ENCODE measurements at regions of chr5 and their contacts with region 1.

Region 1: GRCh38 chr5:34459908-34460307 is 196.2 kb upstream of the RAI14 start:
- DNase-seq: no peak
- ATAC-seq: no peak
- H3K4me3 ChIP-seq: no peak overlapping the region
- H3K27ac ChIP-seq: no peak overlapping the region
- H3K4me1 ChIP-seq: no peaks in the 10 kb centered on the region
- H3K27me3 ChIP-seq: no peaks in the 10 kb centered on the region
- CTCF ChIP-seq: no peak
- POLR2A ChIP-seq: no peak

Region 2: DNA sequence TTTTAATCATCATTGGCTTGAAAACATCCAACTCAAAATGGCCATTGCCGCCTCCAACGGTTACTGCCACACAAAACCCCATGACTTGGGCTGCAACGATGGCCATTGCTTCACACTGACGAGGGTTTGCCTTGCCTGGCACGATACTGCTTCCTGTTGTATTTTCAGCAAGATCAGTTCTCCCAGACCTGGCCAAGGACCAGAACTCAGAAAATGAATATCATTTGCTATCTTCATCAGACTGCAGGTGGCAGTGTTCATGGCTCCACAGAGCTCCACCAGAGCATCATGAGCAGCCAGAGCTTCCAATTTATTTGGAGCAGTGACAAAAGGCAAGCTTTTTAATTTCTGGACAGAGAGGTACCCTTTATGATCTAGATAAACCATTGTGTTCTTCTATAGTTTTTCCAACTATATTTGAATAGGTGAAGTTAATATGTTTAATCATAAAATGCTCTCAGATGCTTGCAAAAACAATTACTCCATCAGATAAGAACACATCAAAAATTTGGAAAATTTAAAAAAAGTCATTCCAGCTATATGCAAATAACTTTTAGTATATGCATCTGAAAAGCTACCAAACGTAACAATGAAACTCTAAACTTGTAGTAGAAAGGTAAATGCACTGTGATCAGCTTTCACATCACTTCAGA is 462.5 kb before region 1 on chr5:
- intact Hi-C with region 1: loop called in 9 of 10 experiments (anchors 5 to 10 kb)
- DNase-seq: peak in 4 of 5 donors; percentile 26 to 59 (median 48)
- ATAC-seq: peak; percentile 47 to 82 (median 68)
- H3K4me3 ChIP-seq: no peak overlapping the region
- H3K27ac ChIP-seq: no peak overlapping the region
- H3K4me1 ChIP-seq: peaks cover 0 to 9% (median 2%) of the 10 kb centered on the region in 12 donors
- H3K27me3 ChIP-seq: no peaks in the 10 kb centered on the region
- CTCF ChIP-seq: peak; percentile 46 to 78 (median 62)
- POLR2A ChIP-seq: no peak

Region 3: DNA sequence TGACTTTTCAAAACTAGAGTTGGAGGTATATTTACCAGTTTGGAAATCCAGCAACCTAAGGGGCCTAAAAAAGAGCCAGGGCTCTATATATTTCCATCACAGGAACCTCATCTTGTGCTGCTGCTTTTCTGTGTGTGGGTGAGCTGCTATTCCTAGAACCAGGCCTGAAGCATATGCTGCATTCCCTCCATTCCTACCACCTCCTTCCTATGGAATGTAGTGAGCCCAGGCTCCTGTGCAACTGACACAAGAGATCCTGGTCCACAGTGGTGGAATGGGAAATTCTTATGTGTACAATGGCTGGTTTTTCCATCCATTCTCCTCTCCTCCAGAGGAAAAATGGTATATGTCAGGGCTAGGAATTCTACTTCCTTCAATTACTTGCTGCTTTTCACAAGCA is 1196.8 kb after region 1 on chr5:
- intact Hi-C with region 1: no loop called
- DNase-seq: no peak
- ATAC-seq: no peak
- H3K4me3 ChIP-seq: no peak overlapping the region
- H3K27ac ChIP-seq: no peak overlapping the region
- H3K4me1 ChIP-seq: no peaks in the 10 kb centered on the region
- H3K27me3 ChIP-seq: no peaks in the 10 kb centered on the region
- CTCF ChIP-seq: no peak
- POLR2A ChIP-seq: no peak

Measured in heart left ventricle (tissue), 16 donors.